Common myeloid progenitor, CD34-positive (primary cell): ENCODE measurements at regions of chr1 and their contacts with region 1.

Region 1: GRCh38 chr1:248807067-248807737 is 18.5 kb downstream of the SH3BP5L start:
- DNase-seq: peak; percentile 54 to 72 (median 70)
- H3K4me3 ChIP-seq: peak overlapping the region in 1 of 7 experiments; percentile 8
- H3K27ac ChIP-seq: no peak overlapping the region
- H3K4me1 ChIP-seq: peaks cover 19 to 49% (median 43%) of the 10 kb centered on the region in 4 experiments
- H3K27me3 ChIP-seq: no peaks in the 10 kb centered on the region

Region 2: GRCh38 chr1:248696261-248696660 is 110.9 kb before region 1 on chr1:
- CTCF ChIA-PET with region 1: interaction called, 186 read pairs
- POLR2A ChIA-PET with region 1: no interaction called
- DNase-seq: peak; percentile 47 to 73 (median 70)
- H3K4me3 ChIP-seq: no peak overlapping the region
- H3K27ac ChIP-seq: no peak overlapping the region
- H3K4me1 ChIP-seq: peaks cover 0 to 3% (median 0%) of the 10 kb centered on the region in 4 experiments
- H3K27me3 ChIP-seq: peaks cover 0 to 6% (median 0%) of the 10 kb centered on the region in 5 experiments

Region 3: GRCh38 chr1:248757784-248758195 is 49.4 kb before region 1 on chr1:
- CTCF ChIA-PET with region 1: no interaction called
- POLR2A ChIA-PET with region 1: no interaction called
- DNase-seq: no peak
- H3K4me3 ChIP-seq: no peak overlapping the region
- H3K27ac ChIP-seq: no peak overlapping the region
- H3K4me1 ChIP-seq: no peaks in the 10 kb centered on the region
- H3K27me3 ChIP-seq: peaks cover 0 to 2% (median 0%) of the 10 kb centered on the region in 5 experiments

Region 4: GRCh38 chr1:248825909-248826760 is 18.9 kb after region 1 on chr1 and contains the start of gene SH3BP5L:
- CTCF ChIA-PET with region 1: interaction called, 53 read pairs
- POLR2A ChIA-PET with region 1: interaction called, 5 read pairs
- DNase-seq: peak; percentile 96 to 98 (median 98)
- H3K4me3 ChIP-seq: peak within 1 kb of the TSS; percentile 90 to 99 (median 95)
- H3K27ac ChIP-seq: peak within 1 kb of the TSS; percentile 99 to 100
- H3K4me1 ChIP-seq: peaks cover 22 to 40% (median 31%) of the 10 kb centered on the region in 4 experiments
- H3K27me3 ChIP-seq: no peaks in the 10 kb centered on the region